ENCODE measurements at regions of chr7 and their contacts with region 1.

Region 1: DNA sequence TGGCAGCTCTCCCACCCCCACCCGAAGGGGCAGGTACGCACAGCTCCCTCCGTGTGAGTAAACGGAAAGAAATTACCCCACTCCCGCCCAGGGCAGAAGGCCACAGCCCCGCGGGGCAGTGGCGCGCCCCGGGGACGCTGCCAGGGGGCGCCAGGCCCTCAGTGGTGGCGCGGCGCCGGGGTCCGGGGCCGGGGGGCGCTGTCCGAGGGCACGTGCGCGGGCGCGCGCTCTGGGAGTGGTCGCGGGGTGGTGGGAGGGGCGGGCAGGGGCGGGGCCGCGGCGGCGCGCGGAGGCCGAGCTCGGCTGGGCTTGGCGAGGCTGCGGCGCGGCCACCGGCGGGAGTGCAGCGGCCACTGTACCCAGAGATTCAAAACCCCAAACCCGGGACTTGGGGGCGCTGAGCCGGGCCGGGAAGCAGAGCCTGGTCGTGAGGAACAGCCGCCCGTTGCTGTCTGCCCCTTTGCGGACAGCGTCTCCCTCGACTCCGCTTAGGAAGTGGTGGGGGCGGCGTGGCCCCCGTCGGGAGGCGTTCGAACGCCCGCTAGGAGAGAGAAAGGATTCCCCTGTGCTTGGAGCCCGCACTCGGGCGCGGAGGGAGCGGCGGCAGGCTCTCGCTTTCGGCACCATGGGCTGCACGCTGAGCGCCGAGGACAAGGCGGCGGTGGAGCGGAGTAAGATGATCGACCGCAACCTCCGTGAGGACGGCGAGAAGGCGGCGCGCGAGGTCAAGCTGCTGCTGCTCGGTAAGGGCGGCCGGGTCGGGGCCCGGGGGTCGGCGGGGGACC is at the start of gene GNAI1:
- DNase-seq: peak; percentile 51
- ATAC-seq: peak; percentile 31
- H3K4me3 Mint-ChIP-seq: peak within 1 kb of the TSS; percentile 68
- H3K27ac Mint-ChIP-seq: peak within 1 kb of the TSS; percentile 85
- H3K4me1 Mint-ChIP-seq: peaks cover 35% of the 10 kb centered on the region
- H3K27me3 Mint-ChIP-seq: peaks cover 44% of the 10 kb centered on the region
- total RNA-seq, gene GNAI1: 3.6 to 4.1 TPM

Region 2: GRCh38 chr7:79528421-79528820 is 606.3 kb before region 1 on chr7:
- CTCF ChIA-PET with region 1: no interaction called
- POLR2A ChIA-PET with region 1: no interaction called
- intact Hi-C with region 1: no loop called
- DNase-seq: no peak
- ATAC-seq: no peak
- H3K4me3 Mint-ChIP-seq: no peak overlapping the region
- H3K27ac Mint-ChIP-seq: no peak overlapping the region
- H3K4me1 Mint-ChIP-seq: no peaks in the 10 kb centered on the region
- H3K27me3 Mint-ChIP-seq: no peaks in the 10 kb centered on the region

Region 3: DNA sequence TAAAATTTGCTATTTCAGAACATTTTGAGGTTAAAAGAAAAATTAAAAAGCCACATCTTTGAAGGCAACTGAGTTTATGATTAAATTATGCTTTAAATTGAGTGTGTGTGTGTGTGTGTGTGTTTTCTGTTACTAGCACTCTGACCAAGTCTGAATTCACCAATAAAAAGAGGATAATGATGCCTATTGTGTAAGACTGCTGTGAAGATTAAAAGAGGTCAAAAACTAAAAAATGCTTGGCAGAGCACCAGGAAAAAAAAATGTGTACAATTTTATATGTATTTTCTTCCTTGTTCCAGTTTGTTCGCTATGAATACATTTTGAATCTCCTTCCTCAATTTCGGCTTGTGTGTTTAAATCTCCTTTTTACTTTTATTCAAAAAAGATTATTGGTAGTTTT is 364.7 kb before region 1 on chr7:
- CTCF ChIA-PET with region 1: no interaction called
- POLR2A ChIA-PET with region 1: no interaction called
- intact Hi-C with region 1: no loop called
- DNase-seq: no peak
- ATAC-seq: no peak
- H3K4me3 Mint-ChIP-seq: no peak overlapping the region
- H3K27ac Mint-ChIP-seq: no peak overlapping the region
- H3K4me1 Mint-ChIP-seq: no peaks in the 10 kb centered on the region
- H3K27me3 Mint-ChIP-seq: no peaks in the 10 kb centered on the region

Region 4: GRCh38 chr7:80078159-80078731 is 56.5 kb before region 1 on chr7:
- CTCF ChIA-PET with region 1: no interaction called
- POLR2A ChIA-PET with region 1: no interaction called
- intact Hi-C with region 1: loop called in 1 of 2 experiments (anchors 1 kb)
- DNase-seq: peak; percentile 44
- ATAC-seq: peak; percentile 79
- H3K4me3 Mint-ChIP-seq: peak overlapping the region; percentile 34
- H3K27ac Mint-ChIP-seq: peak overlapping the region; percentile 74
- H3K4me1 Mint-ChIP-seq: peaks cover 12% of the 10 kb centered on the region
- H3K27me3 Mint-ChIP-seq: no peaks in the 10 kb centered on the region

Region 5: DNA sequence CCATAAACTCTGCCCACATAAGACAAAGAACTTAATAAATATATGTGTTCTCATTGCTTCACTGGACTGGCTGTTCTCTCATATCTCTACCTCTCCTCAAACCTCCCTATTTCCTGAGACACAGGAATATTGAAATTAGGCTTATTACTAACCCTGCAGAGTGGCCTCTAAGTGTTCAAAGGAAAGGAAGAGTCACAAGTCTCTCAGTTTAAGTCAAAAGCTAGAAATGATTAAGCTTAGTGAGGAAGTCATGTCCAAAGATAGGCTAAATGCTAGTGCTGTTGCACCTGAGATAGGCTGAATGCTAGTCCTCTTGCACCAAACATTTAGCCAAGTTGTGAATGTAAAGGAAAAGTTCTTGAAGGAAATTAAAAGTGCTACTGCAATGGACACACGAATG is 41.0 kb after region 1 on chr7:
- CTCF ChIA-PET with region 1: no interaction called
- POLR2A ChIA-PET with region 1: no interaction called
- intact Hi-C with region 1: loop called (anchors 1 to 5 kb)
- DNase-seq: no peak
- ATAC-seq: peak; percentile 81
- H3K4me3 Mint-ChIP-seq: no peak overlapping the region
- H3K27ac Mint-ChIP-seq: no peak overlapping the region
- H3K4me1 Mint-ChIP-seq: peaks cover 44% of the 10 kb centered on the region
- H3K27me3 Mint-ChIP-seq: peaks cover 7% of the 10 kb centered on the region

Region 6: DNA sequence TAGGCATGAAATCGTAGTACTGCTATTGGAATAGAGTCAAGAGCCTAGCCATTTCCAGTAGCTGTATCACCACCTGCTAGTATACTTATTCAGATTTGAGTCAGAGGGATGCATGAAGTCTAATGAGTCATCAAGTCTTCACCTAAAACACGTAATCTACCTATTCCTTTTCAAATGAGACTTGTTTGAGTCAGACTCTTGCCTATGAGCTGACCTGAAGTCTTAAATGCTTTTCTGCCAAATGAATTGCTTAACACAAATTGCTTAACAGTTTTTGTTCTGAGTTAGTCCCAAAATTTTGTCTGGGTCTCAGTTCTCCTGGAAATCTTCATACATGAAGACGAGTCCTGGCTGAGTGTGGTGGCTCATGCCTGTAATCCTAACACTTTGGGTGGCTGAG is 212.0 kb after region 1 on chr7:
- CTCF ChIA-PET with region 1: no interaction called
- POLR2A ChIA-PET with region 1: no interaction called
- intact Hi-C with region 1: loop called (anchors 2 to 10 kb)
- DNase-seq: no peak
- ATAC-seq: peak; percentile 97
- H3K4me3 Mint-ChIP-seq: no peak overlapping the region
- H3K27ac Mint-ChIP-seq: no peak overlapping the region
- H3K4me1 Mint-ChIP-seq: peaks cover 11% of the 10 kb centered on the region
- H3K27me3 Mint-ChIP-seq: no peaks in the 10 kb centered on the region

Measured in activated CD4-positive, alpha-beta T cell treated with anti-CD3 and anti-CD28 coated beads for 36 hours (primary cell).